Calu3 (cell line): ENCODE measurements at regions of chr6 and their contacts with region 1.

Region 1: GRCh38 chr6:45105170-45105820 is 222.8 kb upstream of the RUNX2 start:
- DNase-seq: no peak
- H3K4me3 Mint-ChIP-seq: no peak overlapping the region
- H3K27ac Mint-ChIP-seq: no peak overlapping the region
- H3K4me1 Mint-ChIP-seq: no peaks in the 10 kb centered on the region
- H3K27me3 Mint-ChIP-seq: no peaks in the 10 kb centered on the region
- CTCF ChIP-seq: no peak

Region 2: GRCh38 chr6:45377554-45378333 is 272.4 kb after region 1 on chr6 and contains the start of gene SUPT3H:
- CTCF ChIA-PET with region 1: no interaction called
- intact Hi-C with region 1: loop called (anchors 10 kb)
- DNase-seq: peak; percentile 93
- H3K4me3 Mint-ChIP-seq: peak within 1 kb of the TSS; percentile 96
- H3K27ac Mint-ChIP-seq: peak within 1 kb of the TSS; percentile 97
- H3K4me1 Mint-ChIP-seq: no peaks in the 10 kb centered on the region
- H3K27me3 Mint-ChIP-seq: no peaks in the 10 kb centered on the region
- CTCF ChIP-seq: no peak
- total RNA-seq, gene SUPT3H: 7.0 and 10.3 TPM in 2 replicates